ENCODE measurements at regions of chr13 and their contacts with region 1.

Region 1: GRCh38 chr13:51286135-51287002 is 53.1 kb upstream of the SERPINE3 start:
- DNase-seq: peak; percentile 63 to 96
- H3K4me3 ChIP-seq: no peak overlapping the region
- H3K27ac ChIP-seq: no peak overlapping the region
- H3K4me1 ChIP-seq: peaks cover 0 to 3% (median 0%) of the 10 kb centered on the region in 4 experiments; a peak in 2 of 7 replicates
- H3K27me3 ChIP-seq: no peaks in the 10 kb centered on the region
- CTCF ChIP-seq: peak; percentile 86 to 95 (median 92)
- EP300 ChIP-seq: no peak
- POLR2A ChIP-seq: no peak
- RAD21 ChIP-seq: peak; percentile 93

Region 2: GRCh38 chr13:51148952-51149573 is 137.3 kb before region 1 on chr13:
- CTCF ChIA-PET with region 1: interaction called, 100 read pairs
- POLR2A ChIA-PET with region 1: interaction called, 11 read pairs
- DNase-seq: peak in 1 of 2 experiments; percentile 66
- H3K4me3 ChIP-seq: peak overlapping the region in 2 of 4 experiments; percentile 4 to 23; a peak in 3 of 8 replicates
- H3K27ac ChIP-seq: peak overlapping the region; percentile 56
- H3K4me1 ChIP-seq: peaks cover 11 to 32% (median 26%) of the 10 kb centered on the region in 4 experiments
- H3K27me3 ChIP-seq: no peaks in the 10 kb centered on the region
- CTCF ChIP-seq: peak; percentile 32 to 80 (median 58); a peak in 3 of 4 replicates
- EP300 ChIP-seq: no peak
- POLR2A ChIP-seq: no peak
- RAD21 ChIP-seq: peak; percentile 87 to 90

Region 3: GRCh38 chr13:51192348-51192747 is 94.0 kb before region 1 on chr13:
- CTCF ChIA-PET with region 1: interaction called, 14 read pairs
- POLR2A ChIA-PET with region 1: interaction called, 3 read pairs
- DNase-seq: peak in 1 of 2 experiments; percentile 20
- H3K4me3 ChIP-seq: no peak overlapping the region
- H3K27ac ChIP-seq: no peak overlapping the region
- H3K4me1 ChIP-seq: no peaks in the 10 kb centered on the region
- H3K27me3 ChIP-seq: peaks cover 0 to 2% (median 0%) of the 10 kb centered on the region in 4 experiments; a peak in 2 of 7 replicates
- CTCF ChIP-seq: no peak
- EP300 ChIP-seq: no peak
- POLR2A ChIP-seq: no peak
- RAD21 ChIP-seq: no peak

Region 4: GRCh38 chr13:51249770-51250741 is 36.3 kb before region 1 on chr13:
- CTCF ChIA-PET with region 1: interaction called, 42 read pairs
- POLR2A ChIA-PET with region 1: interaction called, 19 read pairs
- DNase-seq: no peak
- H3K4me3 ChIP-seq: no peak overlapping the region
- H3K27ac ChIP-seq: no peak overlapping the region; the same call in 1 of the 2 replicates
- H3K4me1 ChIP-seq: peaks cover 5 to 30% (median 20%) of the 10 kb centered on the region in 4 experiments
- H3K27me3 ChIP-seq: no peaks in the 10 kb centered on the region
- CTCF ChIP-seq: peak in 1 of 3 experiments; percentile 82; a peak in 2 of 4 replicates
- EP300 ChIP-seq: no peak
- POLR2A ChIP-seq: no peak
- RAD21 ChIP-seq: peak; percentile 40 to 57

Region 5: DNA sequence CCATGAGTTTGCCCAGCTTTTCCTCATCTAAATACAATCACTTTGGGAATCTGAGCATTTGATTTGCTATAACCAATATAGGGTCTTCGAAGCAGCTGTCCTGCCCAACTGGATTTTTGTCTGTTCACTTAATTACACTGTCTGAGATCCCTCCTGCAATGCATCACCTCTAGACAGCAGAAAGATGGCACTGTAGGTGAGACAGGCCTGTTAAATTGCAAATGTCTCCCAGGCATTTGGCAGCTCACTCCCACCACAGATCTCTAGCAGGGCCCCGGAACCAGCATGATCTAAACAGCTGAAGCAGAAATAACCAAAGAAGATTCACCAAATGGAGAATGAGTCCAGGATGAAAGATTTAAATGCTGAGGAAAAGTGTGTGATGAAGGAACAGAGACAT is 11.2 kb after region 1 on chr13:
- CTCF ChIA-PET with region 1: interaction called, 52 read pairs
- POLR2A ChIA-PET with region 1: interaction called, 19 read pairs
- DNase-seq: no peak
- H3K4me3 ChIP-seq: no peak overlapping the region
- H3K27ac ChIP-seq: no peak overlapping the region
- H3K4me1 ChIP-seq: peaks cover 2 to 20% (median 14%) of the 10 kb centered on the region in 4 experiments
- H3K27me3 ChIP-seq: no peaks in the 10 kb centered on the region
- CTCF ChIP-seq: peak in 1 of 3 experiments; percentile 29; a peak in 1 of 4 replicates
- EP300 ChIP-seq: no peak
- POLR2A ChIP-seq: no peak
- RAD21 ChIP-seq: peak; percentile 13 to 44; a peak in 2 of 4 replicates

Region 6: DNA sequence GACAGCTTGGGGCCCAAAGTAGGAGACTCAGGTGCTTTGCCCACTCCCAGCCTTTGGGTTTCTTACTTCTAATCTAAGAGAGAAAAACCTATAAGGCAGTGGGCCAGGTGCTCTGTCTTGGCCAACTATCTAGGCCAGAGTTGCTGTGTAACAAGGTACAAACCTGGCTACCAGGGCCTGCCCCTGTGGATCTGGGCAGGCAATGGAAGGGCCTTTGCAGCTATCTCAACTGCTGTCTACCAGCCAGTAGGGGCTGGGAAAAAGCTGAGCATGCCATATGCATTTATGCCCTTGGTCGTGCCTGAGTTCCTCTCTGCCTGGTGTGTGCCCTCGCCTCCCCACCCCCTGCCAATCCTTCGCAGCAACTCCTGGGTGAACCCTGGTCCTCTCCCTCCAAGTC is 36.5 kb after region 1 on chr13:
- CTCF ChIA-PET with region 1: interaction called, 18 read pairs
- POLR2A ChIA-PET with region 1: interaction called, 3 read pairs
- DNase-seq: no peak
- H3K4me3 ChIP-seq: no peak overlapping the region
- H3K27ac ChIP-seq: no peak overlapping the region
- H3K4me1 ChIP-seq: peaks cover 4 to 16% (median 12%) of the 10 kb centered on the region in 4 experiments; a peak in 6 of 7 replicates
- H3K27me3 ChIP-seq: no peaks in the 10 kb centered on the region
- CTCF ChIP-seq: peak in 1 of 3 experiments; percentile 16; a peak in 1 of 4 replicates
- EP300 ChIP-seq: no peak
- POLR2A ChIP-seq: no peak
- RAD21 ChIP-seq: no peak

Measured in H1 (cell line).